Gastrocnemius medialis (tissue), 4 donors: ENCODE measurements at regions of chr13 and their contacts with region 1.

Region 1: GRCh38 chr13:62910541-62911060 is 1495.0 kb upstream of the PCDH20 start:
- DNase-seq: no peak
- ATAC-seq: no peak
- H3K4me3 ChIP-seq: no peak overlapping the region
- H3K27ac ChIP-seq: no peak overlapping the region
- H3K4me1 ChIP-seq: no peaks in the 10 kb centered on the region
- H3K27me3 ChIP-seq: no peaks in the 10 kb centered on the region
- CTCF ChIP-seq: no peak
- POLR2A ChIP-seq: no peak

Region 2: GRCh38 chr13:62837895-62838294 is 72.7 kb before region 1 on chr13:
- in situ Hi-C with region 1: no loop called
- intact Hi-C with region 1: loop called (anchors 2 kb)
- DNase-seq: no peak
- ATAC-seq: no peak
- H3K4me3 ChIP-seq: no peak overlapping the region
- H3K27ac ChIP-seq: no peak overlapping the region
- H3K4me1 ChIP-seq: no peaks in the 10 kb centered on the region
- H3K27me3 ChIP-seq: no peaks in the 10 kb centered on the region
- CTCF ChIP-seq: no peak
- POLR2A ChIP-seq: no peak

Region 3: GRCh38 chr13:63093907-63094469 is 183.4 kb after region 1 on chr13:
- in situ Hi-C with region 1: no loop called
- intact Hi-C with region 1: no loop called
- DNase-seq: no peak
- ATAC-seq: no peak
- H3K4me3 ChIP-seq: no peak overlapping the region
- H3K27ac ChIP-seq: no peak overlapping the region
- H3K4me1 ChIP-seq: no peaks in the 10 kb centered on the region
- H3K27me3 ChIP-seq: no peaks in the 10 kb centered on the region
- CTCF ChIP-seq: no peak
- POLR2A ChIP-seq: no peak